Panc1 (cell line): ENCODE measurements at regions of chr21 and their contacts with region 1.

Region 1: DNA sequence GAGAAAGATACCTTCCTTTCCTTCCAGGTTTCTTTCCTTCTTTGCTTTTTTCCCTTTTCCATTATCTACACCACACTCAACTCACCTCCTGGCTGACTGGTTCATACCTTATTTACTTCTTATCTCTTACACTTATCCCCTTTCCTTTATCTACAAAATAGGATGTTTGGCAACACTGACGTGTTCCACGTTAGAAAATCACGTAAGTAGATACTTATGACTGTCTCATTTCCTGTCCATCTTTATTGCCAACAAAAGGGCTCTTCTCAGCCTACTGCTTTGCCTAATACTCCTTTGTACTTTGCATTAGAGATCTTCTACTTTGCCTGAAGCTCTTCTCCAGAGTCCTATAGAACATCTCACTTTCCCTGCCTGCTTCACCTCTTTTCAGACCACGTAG is 25.1 kb downstream of the SYNJ1 start:
- DNase-seq: no peak
- ATAC-seq: no peak
- H3K4me3 ChIP-seq: no peak overlapping the region
- H3K27ac ChIP-seq: no peak overlapping the region
- H3K4me1 ChIP-seq: no peaks in the 10 kb centered on the region
- H3K27me3 ChIP-seq: no peaks in the 10 kb centered on the region
- CTCF ChIP-seq: no peak

Region 2: GRCh38 chr21:32717851-32718316 is 15.2 kb after region 1 on chr21:
- CTCF ChIA-PET with region 1: no interaction called
- POLR2A ChIA-PET with region 1: no interaction called
- in situ Hi-C with region 1: no loop called
- intact Hi-C with region 1: no loop called
- DNase-seq: no peak
- ATAC-seq: no peak
- H3K4me3 ChIP-seq: no peak overlapping the region
- H3K27ac ChIP-seq: no peak overlapping the region
- H3K4me1 ChIP-seq: no peaks in the 10 kb centered on the region; the same call in 1 of the 2 replicates
- H3K27me3 ChIP-seq: no peaks in the 10 kb centered on the region
- CTCF ChIP-seq: no peak

Region 3: GRCh38 chr21:32826329-32827167 is 123.8 kb after region 1 on chr21:
- CTCF ChIA-PET with region 1: interaction called, 16 read pairs
- POLR2A ChIA-PET with region 1: no interaction called
- in situ Hi-C with region 1: no loop called
- intact Hi-C with region 1: no loop called
- DNase-seq: peak; percentile 32
- ATAC-seq: peak; percentile 99
- H3K4me3 ChIP-seq: no peak overlapping the region
- H3K27ac ChIP-seq: no peak overlapping the region
- H3K4me1 ChIP-seq: no peaks in the 10 kb centered on the region
- H3K27me3 ChIP-seq: no peaks in the 10 kb centered on the region
- CTCF ChIP-seq: peak; percentile 69